ENCODE measurements at regions of chr18 and their contacts with region 1.

Region 1: DNA sequence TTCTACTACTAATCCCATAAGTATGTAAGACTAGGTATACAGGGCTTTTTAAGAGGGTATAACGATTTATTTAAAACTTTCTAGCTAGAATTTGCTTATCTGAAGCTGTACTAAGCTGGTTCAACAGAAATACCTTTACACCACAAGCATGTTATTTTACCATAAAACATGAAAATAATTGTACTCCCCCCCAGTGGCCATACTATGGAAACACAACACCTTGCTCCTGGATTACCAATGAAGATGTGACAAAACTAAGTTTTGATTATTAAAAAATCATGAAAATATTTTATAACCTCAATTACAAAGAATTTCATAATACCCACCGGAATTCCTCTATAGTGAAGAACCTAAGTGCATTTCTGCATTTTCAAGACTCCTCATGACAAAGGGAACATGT is 27.3 kb downstream of the LPIN2 start:
- DNase-seq: peak; percentile 46 to 65 (median 62)
- H3K4me3 ChIP-seq: no peak overlapping the region
- H3K27ac ChIP-seq: no peak overlapping the region
- H3K4me1 ChIP-seq: peaks cover 28 to 44% (median 38%) of the 10 kb centered on the region in 4 experiments
- H3K27me3 ChIP-seq: no peaks in the 10 kb centered on the region

Region 2: DNA sequence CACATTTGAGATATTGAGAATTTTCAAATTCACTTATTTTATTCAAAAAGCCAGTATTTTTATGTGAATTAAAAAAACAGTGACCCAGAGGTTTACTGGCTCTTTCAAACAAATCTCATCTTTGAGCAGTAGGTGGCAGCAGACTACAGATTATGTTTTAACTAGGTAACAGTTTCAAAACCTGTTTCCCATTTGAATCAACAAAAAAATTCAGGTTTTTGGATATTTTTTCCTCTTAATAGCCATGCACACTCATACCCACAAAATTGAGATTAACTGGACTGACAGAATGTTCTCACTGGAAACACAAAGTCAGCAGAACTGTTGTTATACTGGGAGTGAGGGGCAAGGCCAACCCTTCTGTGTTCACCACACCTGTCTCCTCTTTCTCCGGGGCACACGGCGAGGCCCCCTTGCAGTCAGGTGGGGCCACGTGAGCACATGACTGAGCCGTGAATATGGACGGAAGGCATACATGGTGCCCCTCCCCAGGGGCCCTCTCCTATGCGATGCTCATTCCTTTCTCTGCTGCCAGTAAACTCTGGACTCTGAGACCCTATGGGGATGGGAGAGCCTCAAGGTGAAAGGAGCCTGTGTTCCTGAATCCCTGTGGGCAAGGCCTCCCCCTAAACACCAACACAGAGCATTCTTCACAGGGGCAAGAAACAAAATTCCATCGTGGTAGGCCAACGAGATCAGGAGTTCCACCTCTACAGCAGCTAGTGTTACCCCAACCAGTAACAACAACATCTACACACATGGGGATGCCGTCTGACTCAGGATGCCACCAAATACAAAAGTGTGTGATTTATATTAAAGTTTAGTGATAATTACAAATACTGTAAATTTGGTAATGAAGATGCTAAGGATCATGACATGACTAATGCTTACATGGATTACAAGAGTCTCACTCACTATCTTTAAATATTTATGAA is 53.1 kb before region 1 on chr18:
- CTCF ChIA-PET with region 1: interaction called, 46 read pairs
- POLR2A ChIA-PET with region 1: no interaction called
- DNase-seq: peak; percentile 68 to 88 (median 79)
- H3K4me3 ChIP-seq: no peak overlapping the region
- H3K27ac ChIP-seq: no peak overlapping the region
- H3K4me1 ChIP-seq: peaks cover 0 to 7% (median 0%) of the 10 kb centered on the region in 4 experiments
- H3K27me3 ChIP-seq: no peaks in the 10 kb centered on the region

Region 3: GRCh38 chr18:2948038-2948437 is 37.6 kb before region 1 on chr18:
- CTCF ChIA-PET with region 1: interaction called, 46 read pairs
- POLR2A ChIA-PET with region 1: interaction called, 3 read pairs
- DNase-seq: peak; percentile 47 to 71 (median 59)
- H3K4me3 ChIP-seq: no peak overlapping the region
- H3K27ac ChIP-seq: no peak overlapping the region
- H3K4me1 ChIP-seq: peaks cover 0 to 5% (median 0%) of the 10 kb centered on the region in 4 experiments
- H3K27me3 ChIP-seq: no peaks in the 10 kb centered on the region

Region 4: GRCh38 chr18:2958819-2959298 is 26.8 kb before region 1 on chr18:
- CTCF ChIA-PET with region 1: interaction called, 12 read pairs
- POLR2A ChIA-PET with region 1: interaction called, 3 read pairs
- DNase-seq: peak in 2 of 3 donors; percentile 52 to 60
- H3K4me3 ChIP-seq: peak overlapping the region in 1 of 7 experiments; percentile 41
- H3K27ac ChIP-seq: peak overlapping the region in 1 of 2 experiments; percentile 4
- H3K4me1 ChIP-seq: peaks cover 36 to 59% (median 46%) of the 10 kb centered on the region in 4 experiments
- H3K27me3 ChIP-seq: no peaks in the 10 kb centered on the region

Region 5: GRCh38 chr18:2971741-2972552 is 13.7 kb before region 1 on chr18:
- CTCF ChIA-PET with region 1: interaction called, 13 read pairs
- POLR2A ChIA-PET with region 1: interaction called, 6 read pairs
- DNase-seq: peak in 2 of 3 donors; percentile 81 to 87
- H3K4me3 ChIP-seq: peak overlapping the region in 6 of 7 experiments; percentile 8 to 73 (median 60)
- H3K27ac ChIP-seq: peak overlapping the region; percentile 41 to 86
- H3K4me1 ChIP-seq: peaks cover 42 to 72% (median 59%) of the 10 kb centered on the region in 4 experiments
- H3K27me3 ChIP-seq: no peaks in the 10 kb centered on the region

Measured in common myeloid progenitor, CD34-positive (primary cell).